PC-9 (cell line): ENCODE measurements at regions of chr12 and their contacts with region 1.

Region 1: DNA sequence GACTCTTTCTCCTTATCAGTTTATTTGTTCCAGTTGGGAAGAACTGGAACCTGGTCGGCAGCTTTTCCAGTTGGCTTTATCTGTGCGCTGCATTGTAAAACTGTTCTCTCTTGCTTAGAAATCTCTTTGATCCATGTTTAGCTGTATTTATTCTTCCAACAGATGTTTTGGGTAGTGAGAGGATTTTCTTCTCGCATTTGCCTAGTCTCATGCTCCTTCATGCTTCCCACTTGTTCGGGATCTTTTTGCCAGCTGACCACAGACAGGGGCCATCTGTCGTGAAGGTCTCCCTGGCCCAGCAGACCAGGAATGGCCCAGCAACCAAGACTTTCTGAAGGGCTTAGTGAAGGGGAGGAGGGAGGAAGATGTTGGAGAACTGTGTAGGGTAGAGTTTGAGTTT is 21.6 kb downstream of the NTF3 start:
- DNase-seq: no peak
- H3K4me3 ChIP-seq: no peak overlapping the region
- H3K27ac ChIP-seq: no peak overlapping the region
- H3K4me1 ChIP-seq: no peaks in the 10 kb centered on the region
- H3K27me3 ChIP-seq: peaks cover 91% of the 10 kb centered on the region
- CTCF ChIP-seq: no peak

Region 2: GRCh38 chr12:5318874-5319273 is 134.6 kb before region 1 on chr12:
- CTCF ChIA-PET with region 1: no interaction called
- POLR2A ChIA-PET with region 1: interaction called, 10 read pairs
- intact Hi-C with region 1: no loop called
- DNase-seq: no peak
- H3K4me3 ChIP-seq: no peak overlapping the region
- H3K27ac ChIP-seq: no peak overlapping the region
- H3K4me1 ChIP-seq: no peaks in the 10 kb centered on the region
- H3K27me3 ChIP-seq: no peaks in the 10 kb centered on the region
- CTCF ChIP-seq: no peak